ENCODE measurements at regions of chrX and their contacts with region 1.

Region 1: DNA sequence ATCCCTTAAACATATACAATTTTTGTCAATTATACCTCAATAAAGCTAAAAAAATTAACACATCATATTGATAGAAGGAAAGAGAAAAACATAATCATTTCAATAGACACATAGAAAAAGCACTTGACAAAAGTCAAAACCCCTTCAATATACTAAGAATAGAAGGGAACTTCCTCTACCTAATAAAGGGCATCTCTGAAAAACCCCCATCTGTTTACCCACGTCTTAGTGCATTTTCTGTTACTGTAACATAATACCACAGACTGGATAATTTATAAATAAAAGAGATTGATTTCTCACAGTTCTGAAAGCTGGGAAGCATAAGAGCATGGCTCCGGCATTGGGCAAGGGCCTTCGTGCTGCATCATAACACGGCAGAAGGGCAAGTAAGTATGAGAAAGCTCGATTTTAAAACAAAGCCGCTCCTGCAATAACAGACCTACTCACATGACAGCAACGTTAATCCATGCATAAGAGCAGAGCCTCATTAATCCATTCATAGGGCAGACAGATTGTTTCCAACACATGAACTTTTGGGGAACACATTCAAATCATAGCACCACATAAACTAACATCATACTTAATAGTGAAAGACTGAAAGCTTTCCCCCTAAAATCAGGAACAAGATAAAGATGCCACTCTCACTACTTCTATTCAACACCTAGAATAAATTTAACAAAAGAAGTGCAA is 15.7 kb downstream of the STEEP1 start:
- DNase-seq: no peak
- ATAC-seq: peak; percentile 77
- H3K4me3 Mint-ChIP-seq: peak overlapping the region; percentile 69
- H3K27ac Mint-ChIP-seq: peak overlapping the region; percentile 88
- H3K4me1 Mint-ChIP-seq: peaks cover 34% of the 10 kb centered on the region
- H3K27me3 Mint-ChIP-seq: no peaks in the 10 kb centered on the region
- CTCF ChIP-seq: no peak

Region 2: DNA sequence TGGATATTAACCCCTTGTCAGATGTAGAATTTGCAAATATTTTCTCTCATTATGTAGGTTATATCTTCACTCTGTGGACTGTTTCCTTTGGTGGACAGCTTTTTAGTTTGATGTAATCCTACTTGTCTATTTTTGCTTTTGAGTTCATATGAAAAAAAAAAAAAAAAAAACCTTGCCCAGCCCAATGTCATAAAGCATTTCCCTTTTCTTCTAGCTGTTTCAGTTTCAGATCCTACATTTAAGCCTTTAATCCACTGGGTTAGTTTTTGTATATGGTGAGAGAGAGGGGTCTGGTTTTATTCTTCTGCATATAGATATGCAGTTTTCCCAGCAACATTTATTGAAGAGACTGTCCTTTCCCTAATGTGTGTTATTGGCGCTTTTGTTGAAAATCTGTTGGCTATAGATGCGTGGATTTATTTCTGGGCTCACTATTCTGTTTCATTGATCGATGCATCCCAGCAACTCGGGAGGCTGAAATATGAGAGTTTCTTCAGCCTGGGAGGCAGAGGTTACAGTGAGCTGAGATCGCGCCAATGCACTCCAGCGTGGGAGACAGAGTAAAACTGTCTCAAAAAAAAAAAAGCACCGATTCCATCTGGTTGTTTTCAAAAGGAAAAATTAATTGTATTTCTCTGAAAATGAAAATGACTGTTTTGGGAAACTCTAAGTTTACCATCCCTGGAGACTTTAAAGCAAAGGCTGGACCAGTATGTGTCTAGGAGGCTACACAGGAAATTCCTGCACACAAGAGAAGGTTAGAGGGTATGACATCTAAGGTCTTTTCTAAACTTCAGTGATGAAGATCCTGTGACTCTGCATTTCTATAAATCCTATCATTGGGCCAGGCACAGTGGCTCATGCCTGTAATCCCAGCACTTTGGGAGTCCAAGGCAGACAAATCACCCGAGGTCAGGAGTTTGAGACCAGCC is 19.9 kb before region 1 on chrX:
- CTCF ChIA-PET with region 1: no interaction called
- POLR2A ChIA-PET with region 1: no interaction called
- intact Hi-C with region 1: loop called (anchors 2 kb)
- DNase-seq: no peak
- ATAC-seq: peak; percentile 75
- H3K4me3 Mint-ChIP-seq: no peak overlapping the region
- H3K27ac Mint-ChIP-seq: peak overlapping the region; percentile 72
- H3K4me1 Mint-ChIP-seq: peaks cover 22% of the 10 kb centered on the region
- H3K27me3 Mint-ChIP-seq: no peaks in the 10 kb centered on the region
- CTCF ChIP-seq: no peak

Region 3: DNA sequence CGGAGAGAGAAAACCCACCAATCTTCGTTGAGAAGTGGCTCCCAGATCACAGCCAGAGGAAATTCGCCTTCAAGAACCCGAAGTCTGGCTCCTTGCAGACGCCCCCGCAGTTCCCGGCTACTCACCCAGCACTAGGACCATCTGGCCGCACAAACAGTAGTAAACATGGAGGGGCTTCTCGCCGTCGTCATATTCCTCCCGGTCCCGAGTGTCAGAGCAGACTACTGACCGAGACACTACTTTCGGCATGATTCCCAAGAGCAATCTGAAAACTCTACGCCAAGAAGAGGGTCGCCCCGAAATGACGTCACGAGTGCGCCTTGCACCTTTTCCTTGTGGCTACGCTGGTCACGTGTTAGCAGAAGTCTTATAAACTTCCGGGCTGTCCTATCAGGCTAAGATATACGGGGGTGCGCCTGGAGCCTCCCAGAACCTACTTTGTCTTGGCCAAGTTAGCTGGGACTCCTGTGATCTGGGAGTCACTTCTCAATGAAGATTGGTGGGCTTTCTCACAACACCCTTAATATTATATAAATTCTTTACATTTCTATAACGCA is 15.7 kb after region 1 on chrX and contains the start of gene STEEP1:
- CTCF ChIA-PET with region 1: no interaction called
- POLR2A ChIA-PET with region 1: no interaction called
- intact Hi-C with region 1: loop called (anchors 2 kb)
- DNase-seq: peak; percentile 66
- ATAC-seq: peak; percentile 91
- H3K4me3 Mint-ChIP-seq: peak within 1 kb of the TSS; percentile 96
- H3K27ac Mint-ChIP-seq: peak within 1 kb of the TSS; percentile 90
- H3K4me1 Mint-ChIP-seq: peaks cover 19% of the 10 kb centered on the region
- H3K27me3 Mint-ChIP-seq: no peaks in the 10 kb centered on the region
- CTCF ChIP-seq: no peak
- total RNA-seq, gene STEEP1: 27.5 and 32.0 TPM in 2 replicates

Region 4: GRCh38 chrX:119574394-119575266 is 25.2 kb after region 1 on chrX and contains the start of gene UBE2A:
- CTCF ChIA-PET with region 1: no interaction called
- POLR2A ChIA-PET with region 1: interaction called, 25 read pairs
- intact Hi-C with region 1: no loop called
- DNase-seq: peak; percentile 78
- ATAC-seq: peak; percentile 94
- H3K4me3 Mint-ChIP-seq: peak within 1 kb of the TSS; percentile 93
- H3K27ac Mint-ChIP-seq: peak within 1 kb of the TSS; percentile 91
- H3K4me1 Mint-ChIP-seq: peaks cover 38% of the 10 kb centered on the region
- H3K27me3 Mint-ChIP-seq: no peaks in the 10 kb centered on the region
- CTCF ChIP-seq: no peak
- total RNA-seq, gene UBE2A: 65.9 and 73.5 TPM in 2 replicates

Region 5: DNA sequence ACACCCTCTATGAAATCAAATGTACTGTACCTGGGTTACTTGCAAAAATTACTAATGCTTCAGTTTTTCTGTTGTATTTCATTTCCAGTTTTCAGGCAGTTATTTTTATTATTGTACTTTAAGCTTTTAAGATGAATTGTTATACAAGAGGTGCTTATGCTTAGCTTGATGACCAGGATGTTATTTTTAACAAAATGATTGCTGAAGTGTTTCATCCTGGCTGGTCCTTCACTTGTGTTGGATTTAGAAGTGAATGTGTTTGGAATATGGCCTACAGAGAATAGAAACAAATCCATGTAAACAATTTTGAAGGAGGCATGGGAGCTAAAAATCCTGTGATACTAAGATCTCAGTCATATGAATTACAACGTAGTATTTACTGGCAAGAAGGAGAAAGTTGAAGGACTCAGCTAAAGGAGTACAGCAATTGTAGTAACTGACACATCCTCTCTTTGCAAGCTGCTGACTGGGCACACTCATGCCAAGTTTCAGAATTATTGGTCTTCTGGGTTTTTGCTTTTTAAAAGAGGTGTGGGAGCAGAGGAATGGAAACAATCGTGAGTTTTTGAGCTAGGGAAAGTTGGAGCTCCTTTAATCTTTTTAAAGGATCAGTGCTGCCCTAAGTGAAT is 34.1 kb after region 1 on chrX:
- CTCF ChIA-PET with region 1: no interaction called
- POLR2A ChIA-PET with region 1: interaction called, 6 read pairs
- intact Hi-C with region 1: loop called (anchors 5 kb)
- DNase-seq: no peak
- ATAC-seq: no peak
- H3K4me3 Mint-ChIP-seq: no peak overlapping the region
- H3K27ac Mint-ChIP-seq: no peak overlapping the region
- H3K4me1 Mint-ChIP-seq: peaks cover 26% of the 10 kb centered on the region
- H3K27me3 Mint-ChIP-seq: no peaks in the 10 kb centered on the region
- CTCF ChIP-seq: no peak

Measured in activated B cell treated with CpG ODN at 0.5 μM for 24 hours (primary cell).